Activated naive CD4-positive, alpha-beta T cell treated with anti-CD3 and anti-CD28 coated beads for 36 hours (primary cell): ENCODE measurements at regions of chr13 and their contacts with region 1.

Region 1: DNA sequence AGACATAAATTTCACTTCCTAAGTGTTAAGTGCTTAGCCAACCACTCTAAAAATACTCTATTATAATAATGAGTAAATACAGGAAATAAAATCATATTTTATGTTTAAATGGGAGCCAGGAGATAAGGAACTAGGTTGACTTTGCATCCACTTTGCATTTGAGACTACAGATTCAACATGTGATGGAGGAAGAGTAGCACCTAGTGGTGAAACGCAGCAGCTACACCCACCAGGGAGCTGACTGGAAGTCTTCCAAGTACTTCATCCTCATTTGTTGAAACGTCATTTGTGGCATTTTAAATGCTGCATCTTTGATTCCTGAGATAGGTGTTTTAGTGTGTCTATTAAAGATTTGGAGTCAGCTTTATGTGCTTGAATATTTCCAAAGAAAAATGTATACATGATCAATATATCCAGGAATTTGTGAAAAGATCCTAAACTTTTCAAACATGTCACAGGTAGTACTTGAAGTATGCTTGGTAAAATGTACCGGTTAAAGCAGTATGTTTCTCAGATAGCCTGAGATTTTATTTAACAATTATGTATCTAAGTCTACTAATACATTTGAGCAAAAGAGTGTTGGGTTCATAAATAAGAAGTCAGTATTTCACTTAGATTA is 17.4 kb upstream of the KCTD12 start:
- DNase-seq: peak; percentile 81
- H3K4me3 Mint-ChIP-seq: no peak overlapping the region
- H3K27ac Mint-ChIP-seq: no peak overlapping the region
- H3K4me1 Mint-ChIP-seq: no peaks in the 10 kb centered on the region
- H3K27me3 Mint-ChIP-seq: peaks cover 10% of the 10 kb centered on the region

Region 2: DNA sequence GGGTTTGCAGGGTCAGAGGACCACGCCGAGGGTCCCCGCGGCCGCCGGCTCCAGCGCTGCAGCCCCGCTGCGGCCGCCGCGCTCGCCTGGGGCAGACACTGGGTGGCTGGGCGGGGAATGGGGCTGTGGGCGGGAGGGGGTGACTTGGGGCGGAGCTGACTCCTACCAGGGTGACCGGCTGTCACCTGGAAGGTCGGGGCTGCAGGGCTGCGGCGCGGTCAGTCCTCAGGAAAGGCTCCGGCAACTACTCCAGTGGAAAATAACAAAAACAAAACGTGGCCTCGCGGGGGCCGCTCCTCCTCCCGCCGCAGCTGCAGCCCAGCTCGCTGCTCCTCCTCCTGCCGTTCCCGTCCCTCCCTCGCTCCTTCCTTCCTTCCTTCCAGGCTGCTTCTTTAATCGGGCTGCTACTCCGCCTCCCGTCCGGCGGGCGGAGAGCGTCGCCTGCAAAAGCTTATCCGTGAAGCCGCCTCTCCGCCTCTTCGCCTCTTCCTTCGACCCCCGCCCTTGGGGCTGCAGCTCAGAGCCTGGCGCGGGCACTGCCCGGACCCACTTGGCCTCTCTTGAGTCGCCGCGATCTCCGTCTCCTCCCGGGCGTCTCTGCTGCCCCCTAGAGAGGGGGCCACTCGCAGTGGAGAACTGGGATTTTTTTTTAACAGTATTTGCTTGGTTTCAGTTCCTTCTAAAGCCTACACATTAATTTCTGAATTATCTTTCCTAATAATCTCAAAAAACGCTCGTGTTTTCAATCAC is 1421.4 kb before region 1 on chr13 and contains the start of gene TBC1D4:
- CTCF ChIA-PET with region 1: no interaction called
- intact Hi-C with region 1: no loop called
- DNase-seq: peak; percentile 68
- H3K4me3 Mint-ChIP-seq: peak within 1 kb of the TSS; percentile 94
- H3K27ac Mint-ChIP-seq: no peak within 1 kb of the TSS
- H3K4me1 Mint-ChIP-seq: peaks cover 11% of the 10 kb centered on the region
- H3K27me3 Mint-ChIP-seq: peaks cover 53% of the 10 kb centered on the region
- total RNA-seq, gene TBC1D4: 13.4 to 19.7 TPM

Region 3: DNA sequence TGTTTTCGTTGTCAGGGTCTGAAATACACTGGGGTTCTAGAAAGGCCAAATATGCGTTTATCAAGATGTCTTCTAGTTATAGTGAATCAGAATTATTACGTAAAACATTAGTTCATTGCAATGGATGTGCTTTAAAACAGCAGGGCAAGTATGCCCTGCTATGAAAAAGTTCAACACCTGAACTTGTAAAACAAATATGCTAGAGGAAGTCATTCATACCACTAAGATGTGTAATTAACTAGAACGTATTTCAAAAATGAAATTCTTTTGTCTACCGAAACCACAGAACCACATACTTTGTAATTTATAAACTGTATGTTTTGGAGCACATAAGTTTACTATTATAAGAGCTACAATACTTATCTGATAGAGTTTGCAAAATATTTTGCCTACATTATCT is 283.6 kb before region 1 on chr13:
- CTCF ChIA-PET with region 1: no interaction called
- intact Hi-C with region 1: no loop called
- DNase-seq: no peak
- H3K4me3 Mint-ChIP-seq: no peak overlapping the region
- H3K27ac Mint-ChIP-seq: no peak overlapping the region
- H3K4me1 Mint-ChIP-seq: no peaks in the 10 kb centered on the region
- H3K27me3 Mint-ChIP-seq: peaks cover 6% of the 10 kb centered on the region

Region 4: DNA sequence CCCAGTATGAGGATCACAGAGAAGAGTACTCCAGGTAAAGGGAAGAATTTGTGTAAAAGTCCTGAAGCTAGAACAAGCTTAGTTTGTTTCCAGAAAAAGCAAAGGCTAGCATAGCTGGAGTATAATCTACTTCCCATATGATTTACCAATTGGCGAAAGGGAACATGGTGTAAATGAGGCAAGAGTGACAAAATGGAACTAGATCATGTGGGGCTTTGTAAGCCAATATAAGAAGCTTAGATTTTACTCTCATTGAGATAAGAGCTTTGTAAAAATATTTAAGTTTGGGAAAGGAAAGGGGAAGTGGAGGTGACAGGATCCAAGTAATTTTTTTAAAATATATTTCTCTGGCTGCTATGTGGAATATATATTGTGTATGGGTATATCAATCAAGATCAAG is 252.4 kb before region 1 on chr13:
- CTCF ChIA-PET with region 1: no interaction called
- intact Hi-C with region 1: no loop called
- DNase-seq: no peak
- H3K4me3 Mint-ChIP-seq: no peak overlapping the region
- H3K27ac Mint-ChIP-seq: no peak overlapping the region
- H3K4me1 Mint-ChIP-seq: no peaks in the 10 kb centered on the region
- H3K27me3 Mint-ChIP-seq: peaks cover 29% of the 10 kb centered on the region

Region 5: GRCh38 chr13:76667551-76667950 is 236.1 kb before region 1 on chr13:
- CTCF ChIA-PET with region 1: interaction called, 26 read pairs
- intact Hi-C with region 1: loop called (anchors 1 kb)
- DNase-seq: peak; percentile 40
- H3K4me3 Mint-ChIP-seq: no peak overlapping the region
- H3K27ac Mint-ChIP-seq: no peak overlapping the region
- H3K4me1 Mint-ChIP-seq: peaks cover 7% of the 10 kb centered on the region
- H3K27me3 Mint-ChIP-seq: no peaks in the 10 kb centered on the region

Region 6: GRCh38 chr13:76822698-76823267 is 80.9 kb before region 1 on chr13:
- CTCF ChIA-PET with region 1: interaction called, 40 read pairs
- intact Hi-C with region 1: loop called (anchors 1 kb)
- DNase-seq: peak; percentile 19
- H3K4me3 Mint-ChIP-seq: no peak overlapping the region
- H3K27ac Mint-ChIP-seq: no peak overlapping the region
- H3K4me1 Mint-ChIP-seq: peaks cover 2% of the 10 kb centered on the region
- H3K27me3 Mint-ChIP-seq: no peaks in the 10 kb centered on the region

Region 7: DNA sequence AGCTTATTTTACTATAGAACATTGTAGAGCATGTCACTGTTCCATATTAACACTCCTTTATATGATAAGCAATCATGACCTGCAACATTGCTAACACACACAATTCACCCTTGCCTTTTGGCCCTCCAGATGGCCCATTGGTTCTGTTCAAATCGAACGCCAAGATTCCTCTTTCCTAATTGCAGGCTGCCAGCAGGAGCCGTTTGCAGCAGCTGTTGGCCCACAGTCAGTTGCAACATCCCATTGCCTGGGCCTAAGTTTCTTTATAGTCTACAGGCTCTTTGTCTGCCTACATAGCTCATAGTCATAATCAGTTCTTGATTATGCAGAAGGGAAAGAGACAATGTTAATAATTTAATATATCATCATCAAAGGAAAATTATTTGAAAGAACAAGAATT is 55.1 kb before region 1 on chr13:
- CTCF ChIA-PET with region 1: no interaction called
- intact Hi-C with region 1: no loop called
- DNase-seq: no peak
- H3K4me3 Mint-ChIP-seq: no peak overlapping the region
- H3K27ac Mint-ChIP-seq: no peak overlapping the region
- H3K4me1 Mint-ChIP-seq: no peaks in the 10 kb centered on the region
- H3K27me3 Mint-ChIP-seq: no peaks in the 10 kb centered on the region

Region 8: GRCh38 chr13:76879203-76879882 is 24.3 kb before region 1 on chr13:
- CTCF ChIA-PET with region 1: interaction called, 23 read pairs
- intact Hi-C with region 1: no loop called
- DNase-seq: peak; percentile 86
- H3K4me3 Mint-ChIP-seq: peak overlapping the region; percentile 63
- H3K27ac Mint-ChIP-seq: peak overlapping the region; percentile 85
- H3K4me1 Mint-ChIP-seq: peaks cover 39% of the 10 kb centered on the region
- H3K27me3 Mint-ChIP-seq: no peaks in the 10 kb centered on the region